Right ventricle myocardium inferior (tissue), 1 donor: ENCODE measurements at regions of chr12 and their contacts with region 1.

Region 1: GRCh38 chr12:93127582-93128331 is 198.7 kb upstream of the EEA1 start:
- DNase-seq: peak; percentile 87
- ATAC-seq: peak; percentile 92

Region 2: DNA sequence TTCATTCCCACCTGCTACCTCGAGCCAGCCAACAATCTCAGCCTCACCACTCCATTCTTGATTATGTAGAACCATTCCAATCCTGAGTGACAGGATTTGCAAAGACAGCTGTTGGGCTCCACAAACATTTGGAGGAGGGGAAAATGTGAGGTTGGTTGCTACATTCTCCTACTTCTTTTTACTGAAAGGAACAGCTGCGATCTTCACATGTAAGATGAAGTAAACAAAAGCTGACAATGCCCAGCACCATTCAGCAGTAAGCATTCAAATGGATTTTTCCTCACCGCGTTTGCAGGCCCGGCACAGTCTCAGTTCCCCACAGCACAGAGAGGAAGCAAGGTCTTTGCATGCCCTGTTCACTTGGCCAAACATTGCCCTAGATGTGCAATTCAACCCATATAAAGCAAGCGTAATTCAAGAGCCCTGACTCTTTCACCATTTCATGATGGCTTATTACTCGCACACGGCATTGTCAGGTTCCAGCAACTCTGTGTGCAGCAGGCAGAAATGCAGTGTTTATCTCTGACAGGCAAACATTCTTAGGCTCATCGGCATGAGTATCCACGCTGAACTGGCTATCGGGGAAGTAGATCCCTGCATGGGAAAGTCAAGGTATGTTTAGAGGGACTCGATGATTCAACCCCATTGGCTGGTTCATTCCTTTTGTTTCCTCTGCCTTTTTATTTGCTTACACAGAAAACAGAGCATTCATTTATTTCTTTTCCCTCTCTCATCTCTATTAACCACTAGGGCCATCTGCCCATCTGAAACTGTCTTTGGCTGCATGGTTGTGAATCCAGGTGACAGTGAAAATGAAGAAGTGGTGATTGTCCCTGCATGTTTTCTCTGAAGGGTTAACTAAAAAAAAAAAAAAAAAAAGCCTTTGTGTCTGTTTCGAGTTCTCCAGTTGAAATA is 661.1 kb before region 1 on chr12:
- intact Hi-C with region 1: no loop called
- DNase-seq: no peak
- ATAC-seq: peak; percentile 32

Region 3: GRCh38 chr12:93025145-93025805 is 102.5 kb before region 1 on chr12:
- intact Hi-C with region 1: loop called (anchors 5 kb)
- DNase-seq: no peak
- ATAC-seq: no peak

Region 4: GRCh38 chr12:93176165-93176564 is 48.4 kb after region 1 on chr12:
- intact Hi-C with region 1: loop called (anchors 2 kb)
- DNase-seq: no peak
- ATAC-seq: no peak

Region 5: DNA sequence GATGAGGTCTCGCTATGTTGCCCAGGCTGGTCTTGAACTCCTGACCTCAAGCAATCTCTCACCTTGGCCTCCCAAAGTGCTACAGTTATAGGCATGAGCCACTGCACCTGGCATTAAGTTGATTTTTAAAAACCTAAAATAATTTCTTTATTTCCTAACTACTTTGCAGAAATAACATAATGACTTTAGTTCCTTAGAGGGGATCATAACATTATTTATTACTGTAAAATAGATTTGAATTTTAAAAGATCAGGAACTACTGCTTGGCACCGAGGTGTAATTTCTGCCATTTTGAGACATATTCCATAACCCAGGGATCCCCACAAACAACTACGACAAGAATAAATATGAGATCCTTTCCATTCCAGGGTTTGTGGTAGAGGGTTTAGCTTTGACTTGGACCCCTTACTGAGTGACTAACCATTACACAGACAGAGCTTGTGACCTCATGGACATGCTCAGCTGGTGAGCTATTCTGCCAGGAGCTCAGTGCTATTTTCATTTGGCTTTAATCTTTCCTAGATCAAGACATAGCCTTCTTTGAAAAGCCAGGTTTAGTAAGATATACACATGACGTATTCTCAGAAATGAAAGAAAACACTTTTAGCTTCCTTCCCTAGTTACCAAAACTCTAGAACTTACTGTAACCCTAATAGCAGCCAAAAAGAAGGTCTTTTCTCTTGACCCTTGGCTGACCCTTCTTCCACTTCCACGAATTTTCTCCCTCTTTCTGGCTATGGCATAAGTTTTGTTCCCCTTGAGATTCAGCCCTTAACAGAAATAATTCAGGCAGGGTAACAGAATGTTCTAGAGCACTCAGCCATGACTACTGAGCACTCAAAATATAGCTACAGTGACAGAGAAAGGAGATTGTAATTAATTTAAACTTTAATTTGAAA is 174.8 kb after region 1 on chr12:
- intact Hi-C with region 1: loop called (anchors 5 kb)
- DNase-seq: no peak
- ATAC-seq: peak; percentile 80

Region 6: GRCh38 chr12:93419388-93420034 is 291.8 kb after region 1 on chr12:
- intact Hi-C with region 1: loop called (anchors 5 kb)
- DNase-seq: no peak
- ATAC-seq: peak; percentile 49